HEK293T (cell line): ENCODE measurements at regions of chr12 and their contacts with region 1.

Region 1: DNA sequence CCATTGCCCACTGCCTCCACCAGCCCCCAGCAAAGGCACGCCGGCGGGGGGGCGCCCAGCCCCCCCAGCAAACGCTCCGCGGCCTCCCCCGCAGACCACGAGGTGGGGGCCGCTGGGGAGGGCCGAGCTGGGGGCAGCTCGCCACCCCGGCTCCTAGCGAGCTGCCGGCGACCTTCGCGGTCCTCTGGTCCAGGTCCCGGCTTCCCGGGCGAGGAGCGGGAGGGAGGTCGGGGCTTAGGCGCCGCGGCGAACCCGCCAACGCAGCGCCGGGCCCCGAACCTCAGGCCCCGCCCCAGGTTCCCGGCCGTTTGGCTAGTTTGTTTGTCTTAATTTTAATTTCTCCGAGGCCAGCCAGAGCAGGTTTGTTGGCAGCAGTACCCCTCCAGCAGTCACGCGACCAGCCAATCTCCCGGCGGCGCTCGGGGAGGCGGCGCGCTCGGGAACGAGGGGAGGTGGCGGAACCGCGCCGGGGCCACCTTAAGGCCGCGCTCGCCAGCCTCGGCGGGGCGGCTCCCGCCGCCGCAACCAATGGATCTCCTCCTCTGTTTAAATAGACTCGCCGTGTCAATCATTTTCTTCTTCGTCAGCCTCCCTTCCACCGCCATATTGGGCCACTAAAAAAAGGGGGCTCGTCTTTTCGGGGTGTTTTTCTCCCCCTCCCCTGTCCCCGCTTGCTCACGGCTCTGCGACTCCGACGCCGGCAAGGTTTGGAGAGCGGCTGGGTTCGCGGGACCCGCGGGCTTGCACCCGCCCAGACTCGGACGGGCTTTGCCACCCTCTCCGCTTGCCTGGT is at the start of gene CDKN1B:
- DNase-seq: peak; percentile 81

Region 2: GRCh38 chr12:12645485-12645884 is 71.5 kb before region 1 on chr12:
- CTCF ChIA-PET with region 1: no interaction called
- POLR2A ChIA-PET with region 1: no interaction called
- DNase-seq: peak; percentile 17

Region 3: DNA sequence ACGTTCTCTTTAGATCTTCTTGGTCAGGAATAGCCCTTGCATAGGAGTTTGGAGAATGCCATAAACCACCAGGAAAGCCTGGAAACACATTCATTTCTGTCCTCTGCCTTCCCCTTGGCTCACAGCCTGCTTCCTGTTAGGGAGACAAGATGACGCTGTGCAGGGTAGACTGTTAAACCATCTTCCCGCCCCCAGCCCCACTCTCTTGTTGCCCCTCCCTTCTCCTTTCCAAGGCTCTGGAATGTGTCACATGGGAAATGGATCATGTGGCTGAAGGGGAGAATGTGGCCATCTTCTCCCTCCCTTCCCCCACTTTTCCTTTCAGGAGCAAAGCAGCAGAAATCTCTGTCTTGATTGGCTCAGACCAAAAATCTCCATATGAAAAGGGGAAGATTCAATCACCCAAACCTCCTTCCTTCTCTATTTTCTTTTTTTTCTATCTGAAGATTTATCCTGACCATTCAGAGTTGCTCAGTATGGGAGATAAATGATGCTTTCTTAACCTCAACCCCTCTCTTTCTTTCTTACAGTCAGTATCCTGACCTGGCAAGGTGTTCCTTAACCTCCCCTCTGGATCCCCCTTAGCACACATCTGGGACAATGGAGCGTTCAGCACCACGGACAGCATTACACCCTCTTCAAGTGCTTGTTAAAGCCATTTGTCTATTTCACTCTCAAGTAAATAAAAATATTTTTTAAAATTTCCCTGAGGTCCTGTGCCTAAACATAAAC is 32.4 kb before region 1 on chr12:
- CTCF ChIA-PET with region 1: no interaction called
- POLR2A ChIA-PET with region 1: no interaction called
- DNase-seq: no peak

Region 4: DNA sequence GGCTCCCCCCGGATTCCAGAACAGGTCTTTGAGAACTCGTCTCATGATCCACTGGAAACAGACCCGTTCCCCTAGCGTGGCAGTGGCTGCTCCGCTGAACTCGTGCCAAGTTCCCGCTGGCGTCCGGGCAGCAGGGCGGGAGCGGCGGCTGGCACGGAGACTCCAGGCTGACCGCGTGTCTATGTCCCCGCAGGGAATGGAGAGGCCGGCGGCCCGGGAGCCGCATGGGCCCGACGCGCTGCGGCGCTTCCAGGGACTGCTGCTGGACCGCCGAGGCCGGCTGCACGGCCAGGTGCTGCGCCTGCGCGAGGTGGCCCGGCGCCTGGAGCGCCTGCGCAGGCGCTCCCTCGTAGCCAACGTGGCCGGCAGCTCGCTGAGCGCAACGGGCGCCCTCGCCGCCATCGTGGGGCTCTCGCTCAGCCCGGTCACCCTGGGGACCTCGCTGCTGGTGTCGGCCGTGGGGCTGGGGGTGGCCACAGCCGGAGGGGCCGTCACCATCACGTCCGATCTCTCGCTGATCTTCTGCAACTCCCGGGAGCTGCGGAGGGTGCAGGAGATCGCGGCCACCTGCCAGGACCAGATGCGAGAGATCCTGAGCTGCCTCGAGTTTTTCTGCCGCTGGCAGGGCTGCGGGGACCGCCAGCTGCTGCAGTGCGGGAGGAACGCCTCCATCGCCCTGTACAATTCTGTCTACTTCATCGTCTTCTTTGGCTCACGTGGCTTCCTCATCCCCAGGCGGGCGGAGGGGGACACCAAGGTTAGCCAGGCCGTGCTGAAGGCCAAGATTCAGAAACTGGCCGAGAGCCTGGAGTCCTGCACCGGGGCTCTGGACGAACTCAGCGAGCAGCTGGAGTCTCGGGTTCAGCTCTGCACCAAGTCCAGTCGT is 70.0 kb after region 1 on chr12:
- CTCF ChIA-PET with region 1: no interaction called
- POLR2A ChIA-PET with region 1: interaction called, 12 read pairs
- DNase-seq: peak; percentile 96

Region 5: GRCh38 chr12:12983420-12984035 is 266.5 kb after region 1 on chr12:
- CTCF ChIA-PET with region 1: no interaction called
- POLR2A ChIA-PET with region 1: no interaction called
- DNase-seq: peak; percentile 50

Region 6: GRCh38 chr12:13103391-13104033 is 386.5 kb after region 1 on chr12 and contains the start of gene GSG1:
- CTCF ChIA-PET with region 1: no interaction called
- POLR2A ChIA-PET with region 1: no interaction called
- DNase-seq: no peak